Gastrocnemius medialis (tissue), 4 donors: ENCODE measurements at regions of chr2 and their contacts with region 1.

Region 1: GRCh38 chr2:128027801-128028667 is at the start of gene SAP130:
- DNase-seq: peak; percentile 98
- ATAC-seq: peak; percentile 83 to 90
- H3K4me3 ChIP-seq: peak within 1 kb of the TSS; percentile 77 to 98 (median 92)
- H3K27ac ChIP-seq: peak within 1 kb of the TSS; percentile 86 to 99 (median 98)
- H3K4me1 ChIP-seq: peaks cover 12 to 14% of the 10 kb centered on the region in 2 donors
- H3K27me3 ChIP-seq: no peaks in the 10 kb centered on the region
- CTCF ChIP-seq: no peak
- POLR2A ChIP-seq: peak; percentile 83 to 87
- total RNA-seq, gene SAP130: 10.1 to 16.2 (median 11.5) TPM

Region 2: DNA sequence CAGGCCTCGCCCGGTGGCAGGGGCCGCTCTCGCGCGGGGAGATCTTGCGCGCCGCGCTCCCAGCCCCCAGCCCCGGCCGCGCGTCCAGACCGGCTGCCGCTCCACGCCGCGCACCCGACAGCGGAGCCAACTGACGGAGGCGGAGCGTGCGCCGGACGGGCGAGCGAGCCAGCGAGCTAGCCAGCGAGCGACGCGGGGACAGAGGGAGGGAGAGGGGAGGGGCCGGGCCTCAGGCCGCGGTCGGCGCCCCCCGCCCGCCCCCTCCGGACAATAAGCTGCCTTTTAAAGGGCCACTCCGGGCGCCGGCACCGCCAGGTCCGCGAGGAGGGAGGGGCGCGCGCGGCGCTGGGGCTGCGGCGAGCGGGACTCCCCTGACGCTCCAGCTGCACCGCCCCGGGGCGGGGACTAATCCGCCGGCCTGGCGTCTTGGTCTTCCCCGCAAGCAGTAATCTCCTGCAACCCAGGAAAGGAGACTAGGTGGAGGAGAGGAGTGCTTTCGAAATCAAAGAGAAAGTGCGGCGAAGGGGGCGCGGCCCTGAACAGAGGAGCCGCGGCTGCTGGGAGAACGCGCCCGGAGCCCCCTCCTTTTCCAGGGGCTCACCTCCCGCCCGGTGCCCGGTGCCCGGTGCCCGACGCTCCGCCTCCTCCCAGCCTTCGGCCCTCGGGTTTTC is 920.9 kb before region 1 on chr2 and contains the start of gene BIN1:
- in situ Hi-C with region 1: no loop called
- intact Hi-C with region 1: loop called (anchors 5 kb)
- DNase-seq: peak; percentile 87 to 96
- ATAC-seq: peak; percentile 56 to 60
- H3K4me3 ChIP-seq: peak within 1 kb of the TSS; percentile 81 to 95 (median 90)
- H3K27ac ChIP-seq: peak within 1 kb of the TSS; percentile 97 to 100 (median 100)
- H3K4me1 ChIP-seq: peaks cover 26 to 44% of the 10 kb centered on the region in 2 donors
- H3K27me3 ChIP-seq: no peaks in the 10 kb centered on the region
- CTCF ChIP-seq: peak in 2 of 5 experiments; percentile 3 to 10
- POLR2A ChIP-seq: peak; percentile 99
- total RNA-seq, gene BIN1: 1,150 to 2,167 (median 1,736) TPM

Region 3: GRCh38 chr2:127763776-127764175 is 264.3 kb before region 1 on chr2:
- in situ Hi-C with region 1: no loop called
- intact Hi-C with region 1: no loop called
- DNase-seq: no peak
- ATAC-seq: no peak
- H3K4me3 ChIP-seq: no peak overlapping the region
- H3K27ac ChIP-seq: no peak overlapping the region
- H3K4me1 ChIP-seq: peaks cover 0 to 4% of the 10 kb centered on the region in 2 donors
- H3K27me3 ChIP-seq: no peaks in the 10 kb centered on the region
- CTCF ChIP-seq: no peak
- POLR2A ChIP-seq: no peak

Region 4: GRCh38 chr2:127810619-127811396 is 217.2 kb before region 1 on chr2 and contains the start of gene WDR33:
- in situ Hi-C with region 1: no loop called
- intact Hi-C with region 1: loop called (anchors 5 kb)
- DNase-seq: peak; percentile 80 to 90
- ATAC-seq: peak; percentile 95 to 96
- H3K4me3 ChIP-seq: peak within 1 kb of the TSS; percentile 70 to 89 (median 88)
- H3K27ac ChIP-seq: peak within 1 kb of the TSS; percentile 86 to 97 (median 93)
- H3K4me1 ChIP-seq: peaks cover 34 to 48% of the 10 kb centered on the region in 2 donors
- H3K27me3 ChIP-seq: no peaks in the 10 kb centered on the region
- CTCF ChIP-seq: peak in 2 of 5 experiments; percentile 15 to 19
- POLR2A ChIP-seq: peak; percentile 76 to 79
- total RNA-seq, gene WDR33: 13.6 to 31.4 (median 20.6) TPM

Region 5: DNA sequence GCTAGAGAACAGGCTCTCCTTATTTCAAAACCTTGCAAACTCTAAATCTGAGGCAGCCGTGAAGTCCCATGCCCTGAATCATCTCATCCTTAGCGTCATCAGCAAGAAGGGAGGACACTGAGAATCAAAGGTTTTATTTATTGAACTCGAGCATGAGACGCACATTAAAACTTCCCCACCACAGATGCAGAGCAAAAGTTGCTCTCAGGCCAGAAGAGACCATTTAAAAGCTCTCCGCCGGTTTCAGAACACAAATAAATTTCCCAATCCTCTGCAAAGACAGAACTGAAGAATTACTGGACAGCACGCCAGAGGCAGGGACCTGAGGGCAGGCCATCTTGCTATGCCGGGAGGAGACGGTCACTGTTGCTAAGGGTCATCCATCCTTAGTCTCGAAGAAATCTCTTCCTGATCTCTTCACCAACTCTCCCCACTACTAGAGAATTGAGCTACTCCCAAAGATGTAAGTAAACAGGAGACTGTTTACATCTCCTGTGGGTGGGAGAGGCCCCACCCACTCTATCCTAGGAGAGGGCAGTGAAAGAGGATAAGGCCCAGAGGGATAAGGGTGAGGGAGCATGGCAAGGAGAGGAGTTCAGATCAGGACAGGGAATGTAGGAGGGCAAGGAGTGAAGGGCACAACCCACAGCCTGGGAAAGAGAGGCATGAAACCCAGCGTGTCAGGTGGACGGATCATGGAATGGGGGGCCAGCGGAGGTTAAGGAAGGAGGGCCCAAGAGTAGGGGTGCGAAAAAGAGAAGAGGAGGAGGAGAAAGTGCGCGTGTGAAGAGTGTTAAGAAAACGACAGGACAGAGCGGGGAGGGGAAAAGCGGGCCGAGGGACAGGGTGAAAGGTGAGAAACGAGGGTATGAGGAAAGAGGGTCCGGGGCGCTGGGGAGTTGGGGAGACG is 143.3 kb before region 1 on chr2:
- in situ Hi-C with region 1: loop called in 2 of 4 experiments (anchors 10 kb)
- intact Hi-C with region 1: loop called (anchors 2 kb)
- DNase-seq: no peak
- ATAC-seq: no peak
- H3K4me3 ChIP-seq: peak overlapping the region; percentile 57 to 86 (median 68)
- H3K27ac ChIP-seq: peak overlapping the region; percentile 89 to 96 (median 92)
- H3K4me1 ChIP-seq: peaks cover 35 to 43% of the 10 kb centered on the region in 2 donors
- H3K27me3 ChIP-seq: no peaks in the 10 kb centered on the region
- CTCF ChIP-seq: no peak
- POLR2A ChIP-seq: no peak

Region 6: GRCh38 chr2:128057334-128057733 is 29.3 kb after region 1 on chr2:
- in situ Hi-C with region 1: no loop called
- intact Hi-C with region 1: no loop called
- DNase-seq: no peak
- ATAC-seq: no peak
- H3K4me3 ChIP-seq: no peak overlapping the region
- H3K27ac ChIP-seq: no peak overlapping the region
- H3K4me1 ChIP-seq: no peaks in the 10 kb centered on the region
- H3K27me3 ChIP-seq: no peaks in the 10 kb centered on the region
- CTCF ChIP-seq: no peak
- POLR2A ChIP-seq: no peak

Region 7: DNA sequence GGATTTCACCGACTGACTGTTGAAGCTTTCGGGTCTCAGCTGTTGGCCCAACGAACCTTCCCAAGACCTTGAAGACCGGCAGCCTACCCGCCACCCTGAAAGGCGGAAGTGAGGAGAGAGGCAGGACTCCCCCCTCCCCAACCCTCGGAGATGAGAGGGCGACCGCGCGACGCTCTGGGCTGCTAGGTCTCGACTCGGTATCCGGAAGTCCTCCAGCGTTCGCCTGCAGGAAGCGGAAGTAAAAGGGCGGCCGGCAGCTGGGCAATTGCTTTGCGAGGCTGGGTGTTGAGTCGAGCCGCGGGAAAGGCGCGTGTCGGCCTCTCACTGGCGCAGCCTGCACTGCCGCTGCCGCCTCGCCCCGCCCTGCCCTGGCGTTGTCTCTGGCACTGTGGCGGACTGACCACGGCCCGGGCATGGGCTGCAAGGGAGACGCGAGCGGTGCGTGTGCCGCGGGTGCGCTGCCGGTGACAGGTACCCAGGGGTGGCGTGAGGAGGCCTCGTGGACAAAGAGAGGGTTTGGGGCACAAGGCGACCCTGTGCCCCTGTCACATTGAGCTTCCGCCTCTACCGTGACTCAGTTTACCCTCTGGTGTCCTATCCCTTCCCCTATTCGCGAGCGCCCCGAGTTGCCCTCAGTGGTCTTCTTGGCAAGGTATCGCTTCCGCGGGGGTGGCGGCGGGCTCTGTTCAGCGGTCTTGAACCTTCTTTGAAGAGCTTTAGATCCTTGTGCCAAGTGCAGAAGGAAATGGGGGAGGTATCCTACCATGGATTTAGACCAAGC is 63.1 kb after region 1 on chr2 and contains the start of gene UGGT1:
- in situ Hi-C with region 1: loop called in 2 of 4 experiments (anchors 5 to 10 kb)
- intact Hi-C with region 1: loop called (anchors 2 kb)
- DNase-seq: peak; percentile 94 to 95
- ATAC-seq: peak; percentile 99
- H3K4me3 ChIP-seq: peak within 1 kb of the TSS; percentile 86 to 99 (median 92)
- H3K27ac ChIP-seq: peak within 1 kb of the TSS; percentile 83 to 95 (median 86)
- H3K4me1 ChIP-seq: peaks cover 7 to 10% of the 10 kb centered on the region in 2 donors
- H3K27me3 ChIP-seq: no peaks in the 10 kb centered on the region
- CTCF ChIP-seq: no peak
- POLR2A ChIP-seq: peak; percentile 72 to 83
- total RNA-seq, gene UGGT1: 35.1 to 51.7 (median 45.2) TPM